ENCODE measurements at regions of chr4 and their contacts with region 1.

Region 1: DNA sequence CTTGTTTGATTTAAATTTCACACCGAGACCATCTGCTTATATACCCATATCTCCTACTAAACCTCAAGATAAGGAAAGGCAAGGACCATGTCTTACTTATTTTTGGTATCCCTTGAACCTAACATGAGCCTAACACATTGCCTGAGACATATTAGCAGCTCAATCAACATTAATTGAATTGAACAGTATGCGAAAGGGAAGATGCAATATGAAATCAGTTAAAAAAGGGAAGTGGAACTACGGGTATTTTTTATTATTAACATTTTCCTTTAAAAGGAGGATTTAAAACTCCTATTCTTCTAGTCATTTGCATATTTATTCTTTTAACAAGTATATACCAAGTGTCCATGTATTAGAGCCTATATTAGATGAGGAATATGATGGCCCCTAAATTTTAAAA is 197.0 kb downstream of the CAMK2D start:
- DNase-seq: no peak
- ATAC-seq: peak; percentile 59
- H3K4me3 Mint-ChIP-seq: peak overlapping the region; percentile 81
- H3K27ac Mint-ChIP-seq: peak overlapping the region; percentile 97
- H3K4me1 Mint-ChIP-seq: peaks cover 87% of the 10 kb centered on the region
- H3K27me3 Mint-ChIP-seq: no peaks in the 10 kb centered on the region
- CTCF ChIP-seq: no peak

Region 2: GRCh38 chr4:113553082-113553481 is 11.4 kb before region 1 on chr4:
- CTCF ChIA-PET with region 1: interaction called, 41 read pairs
- POLR2A ChIA-PET with region 1: interaction called, 35 read pairs
- intact Hi-C with region 1: loop called (anchors 1 kb)
- DNase-seq: no peak
- ATAC-seq: no peak
- H3K4me3 Mint-ChIP-seq: no peak overlapping the region
- H3K27ac Mint-ChIP-seq: peak overlapping the region; percentile 42
- H3K4me1 Mint-ChIP-seq: peaks cover 33% of the 10 kb centered on the region
- H3K27me3 Mint-ChIP-seq: no peaks in the 10 kb centered on the region
- CTCF ChIP-seq: no peak

Region 3: DNA sequence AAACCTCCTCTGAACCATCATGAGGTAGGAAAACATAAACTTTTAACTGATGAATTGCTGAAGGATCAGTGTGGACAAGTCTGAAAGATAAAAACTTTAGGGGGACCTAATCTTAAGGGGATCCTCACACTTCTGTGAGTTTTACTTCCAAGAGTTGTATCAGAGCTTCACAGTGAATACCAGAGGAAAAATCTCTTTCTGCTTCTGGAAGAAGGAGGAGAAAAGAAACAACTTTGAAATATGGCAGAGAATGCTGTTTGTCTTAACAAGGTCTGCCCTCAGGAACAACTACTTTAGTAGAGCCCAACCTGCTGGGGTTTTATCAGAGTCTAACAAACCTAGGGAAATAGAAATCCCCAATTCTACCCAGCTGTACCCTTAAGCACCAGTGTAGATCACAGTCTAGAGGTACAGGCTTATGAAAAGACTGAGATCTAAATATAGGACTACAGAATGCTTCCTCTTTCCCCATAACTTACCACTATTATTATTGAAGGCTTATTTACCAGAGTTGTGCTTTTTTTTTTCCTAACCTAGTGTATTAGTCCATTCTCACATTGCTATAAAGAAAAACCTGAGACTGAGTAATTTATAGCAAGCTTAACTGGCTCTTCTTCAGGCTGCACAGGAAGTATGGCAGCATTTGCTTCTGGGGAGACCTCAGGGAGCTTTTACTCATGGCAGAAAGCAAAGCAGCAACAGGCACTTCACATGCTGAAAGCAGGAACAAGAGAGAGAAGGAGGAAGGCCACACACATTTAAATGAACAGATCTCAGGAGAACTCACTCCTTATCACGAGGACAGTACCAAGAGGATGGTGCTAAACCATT is 29.1 kb after region 1 on chr4:
- CTCF ChIA-PET with region 1: no interaction called
- POLR2A ChIA-PET with region 1: interaction called, 7 read pairs
- intact Hi-C with region 1: loop called (anchors 1 kb)
- DNase-seq: no peak
- ATAC-seq: peak; percentile 85
- H3K4me3 Mint-ChIP-seq: peak overlapping the region; percentile 46
- H3K27ac Mint-ChIP-seq: peak overlapping the region; percentile 90
- H3K4me1 Mint-ChIP-seq: peaks cover 85% of the 10 kb centered on the region
- H3K27me3 Mint-ChIP-seq: no peaks in the 10 kb centered on the region
- CTCF ChIP-seq: no peak

Region 4: GRCh38 chr4:113682730-113683537 is 118.4 kb after region 1 on chr4:
- CTCF ChIA-PET with region 1: no interaction called
- POLR2A ChIA-PET with region 1: interaction called, 3 read pairs
- intact Hi-C with region 1: loop called (anchors 1 kb)
- DNase-seq: peak; percentile 33
- ATAC-seq: peak; percentile 93
- H3K4me3 Mint-ChIP-seq: peak overlapping the region; percentile 13
- H3K27ac Mint-ChIP-seq: peak overlapping the region; percentile 70
- H3K4me1 Mint-ChIP-seq: peaks cover 53% of the 10 kb centered on the region
- H3K27me3 Mint-ChIP-seq: no peaks in the 10 kb centered on the region
- CTCF ChIP-seq: no peak

Region 5: DNA sequence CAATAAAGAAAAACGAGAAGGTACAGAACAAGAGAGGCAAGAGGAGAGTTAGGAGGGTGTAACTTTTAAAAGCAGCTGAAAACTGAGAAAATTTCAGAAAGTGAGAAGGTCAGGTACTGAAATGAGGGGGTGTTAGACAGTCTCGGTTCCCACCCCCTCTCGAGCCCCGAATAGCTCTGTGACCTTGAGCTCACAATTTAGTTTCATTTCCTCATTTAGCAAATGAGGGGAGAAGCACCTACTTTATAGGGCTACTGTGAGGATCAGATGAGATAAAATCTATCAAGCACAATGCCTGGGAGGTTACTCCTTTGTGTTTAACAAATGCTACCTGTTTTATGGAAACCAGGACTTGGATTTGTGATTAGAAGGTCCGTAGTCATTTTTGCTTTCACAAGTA is 1039.0 kb after region 1 on chr4:
- CTCF ChIA-PET with region 1: no interaction called
- POLR2A ChIA-PET with region 1: no interaction called
- intact Hi-C with region 1: loop called (anchors 2 kb)
- DNase-seq: peak; percentile 37
- ATAC-seq: peak; percentile 71
- H3K4me3 Mint-ChIP-seq: no peak overlapping the region
- H3K27ac Mint-ChIP-seq: no peak overlapping the region
- H3K4me1 Mint-ChIP-seq: peaks cover 21% of the 10 kb centered on the region
- H3K27me3 Mint-ChIP-seq: no peaks in the 10 kb centered on the region
- CTCF ChIP-seq: no peak

Region 6: DNA sequence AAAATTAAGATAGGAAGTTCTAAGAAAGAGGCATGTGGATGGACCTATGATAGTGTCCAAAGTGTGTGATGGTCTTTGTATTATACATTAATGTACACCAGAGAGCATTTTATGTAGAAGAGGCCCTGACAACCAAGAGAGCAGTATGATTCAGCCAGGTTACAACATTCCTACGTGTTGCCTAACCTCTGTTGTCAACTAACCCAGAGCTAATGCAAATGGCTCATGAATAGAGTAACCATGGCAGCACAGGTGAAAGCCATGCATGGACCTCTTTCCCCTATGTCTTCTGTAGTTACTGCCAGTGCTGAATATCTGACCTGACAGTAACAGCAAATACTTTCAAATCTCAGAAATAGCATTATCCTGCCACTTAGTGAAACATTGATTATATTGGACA is 1293.3 kb after region 1 on chr4:
- CTCF ChIA-PET with region 1: no interaction called
- POLR2A ChIA-PET with region 1: no interaction called
- intact Hi-C with region 1: no loop called
- DNase-seq: no peak
- ATAC-seq: no peak
- H3K4me3 Mint-ChIP-seq: no peak overlapping the region
- H3K27ac Mint-ChIP-seq: no peak overlapping the region
- H3K4me1 Mint-ChIP-seq: no peaks in the 10 kb centered on the region
- H3K27me3 Mint-ChIP-seq: no peaks in the 10 kb centered on the region
- CTCF ChIP-seq: no peak

Measured in activated B cell treated with CpG ODN at 0.5 μM for 24 hours (primary cell).